ENCODE measurements at regions of chr19 and their contacts with region 1.

Region 1: GRCh38 chr19:17539238-17540117 is 16.0 kb upstream of the COLGALT1 start:
- DNase-seq: peak; percentile 91 to 100 (median 95)
- H3K4me3 ChIP-seq: peak overlapping the region in 1 of 2 donors; percentile 55
- H3K4me3 Mint-ChIP-seq: peak overlapping the region; percentile 79 to 95 (median 88)
- H3K27ac ChIP-seq: peak overlapping the region; percentile 47
- H3K27ac Mint-ChIP-seq: peak overlapping the region; percentile 61 to 89 (median 84)
- H3K4me1 ChIP-seq: peaks cover 13% of the 10 kb centered on the region
- H3K4me1 Mint-ChIP-seq: peaks cover 10 to 16% (median 12%) of the 10 kb centered on the region in 4 donors
- H3K27me3 ChIP-seq: no peaks in the 10 kb centered on the region
- H3K27me3 Mint-ChIP-seq: no peaks in the 10 kb centered on the region

Region 2: DNA sequence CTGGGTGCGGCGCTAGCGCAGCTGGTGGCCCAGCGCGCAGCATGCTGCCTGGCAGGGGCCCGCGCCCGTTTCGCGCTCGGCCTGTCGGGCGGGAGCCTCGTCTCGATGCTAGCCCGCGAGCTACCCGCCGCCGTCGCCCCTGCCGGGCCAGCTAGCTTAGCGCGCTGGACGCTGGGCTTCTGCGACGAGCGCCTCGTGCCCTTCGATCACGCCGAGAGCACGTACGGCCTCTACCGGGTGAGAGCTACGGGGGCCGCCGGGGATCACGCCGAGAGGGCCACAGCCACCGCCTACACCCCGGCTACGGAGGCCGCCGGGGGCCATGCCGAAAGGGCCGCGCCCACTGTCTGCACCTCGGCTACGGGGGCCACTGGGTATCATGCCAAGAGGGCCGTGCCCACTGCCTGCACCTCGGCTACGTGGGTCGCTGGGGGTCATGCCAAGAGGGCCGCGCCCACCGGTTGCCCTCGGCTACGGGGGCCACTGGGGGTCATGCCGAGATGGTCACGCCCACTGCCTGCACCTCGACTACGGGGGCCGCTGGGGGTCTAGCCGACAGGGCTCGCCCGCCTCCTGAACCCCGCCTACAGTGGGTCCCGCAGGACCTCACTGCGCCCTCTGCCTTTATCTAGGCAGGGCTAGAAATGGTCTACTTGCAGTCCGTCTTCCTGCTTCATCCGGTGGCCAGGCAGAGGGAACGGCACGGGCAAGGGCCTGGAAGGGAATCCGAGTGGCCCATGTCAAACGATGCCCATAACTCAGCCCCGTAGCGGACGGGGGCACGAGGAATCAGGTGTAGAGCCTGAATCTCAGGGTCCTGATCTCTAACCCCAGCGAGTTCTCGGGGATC is 27.5 kb before region 1 on chr19:
- CTCF ChIA-PET with region 1: interaction called, 3 read pairs
- POLR2A ChIA-PET with region 1: interaction called, 13 read pairs
- intact Hi-C with region 1: loop called (anchors 1 kb)
- DNase-seq: peak; percentile 86 to 90 (median 88)
- H3K4me3 ChIP-seq: peak overlapping the region; percentile 50 to 96
- H3K4me3 Mint-ChIP-seq: peak overlapping the region; percentile 88 to 100 (median 98)
- H3K27ac ChIP-seq: peak overlapping the region; percentile 92
- H3K27ac Mint-ChIP-seq: peak overlapping the region; percentile 90 to 98 (median 95)
- H3K4me1 ChIP-seq: peaks cover 20% of the 10 kb centered on the region
- H3K4me1 Mint-ChIP-seq: peaks cover 17 to 47% (median 30%) of the 10 kb centered on the region in 4 donors
- H3K27me3 ChIP-seq: no peaks in the 10 kb centered on the region
- H3K27me3 Mint-ChIP-seq: no peaks in the 10 kb centered on the region

Region 3: DNA sequence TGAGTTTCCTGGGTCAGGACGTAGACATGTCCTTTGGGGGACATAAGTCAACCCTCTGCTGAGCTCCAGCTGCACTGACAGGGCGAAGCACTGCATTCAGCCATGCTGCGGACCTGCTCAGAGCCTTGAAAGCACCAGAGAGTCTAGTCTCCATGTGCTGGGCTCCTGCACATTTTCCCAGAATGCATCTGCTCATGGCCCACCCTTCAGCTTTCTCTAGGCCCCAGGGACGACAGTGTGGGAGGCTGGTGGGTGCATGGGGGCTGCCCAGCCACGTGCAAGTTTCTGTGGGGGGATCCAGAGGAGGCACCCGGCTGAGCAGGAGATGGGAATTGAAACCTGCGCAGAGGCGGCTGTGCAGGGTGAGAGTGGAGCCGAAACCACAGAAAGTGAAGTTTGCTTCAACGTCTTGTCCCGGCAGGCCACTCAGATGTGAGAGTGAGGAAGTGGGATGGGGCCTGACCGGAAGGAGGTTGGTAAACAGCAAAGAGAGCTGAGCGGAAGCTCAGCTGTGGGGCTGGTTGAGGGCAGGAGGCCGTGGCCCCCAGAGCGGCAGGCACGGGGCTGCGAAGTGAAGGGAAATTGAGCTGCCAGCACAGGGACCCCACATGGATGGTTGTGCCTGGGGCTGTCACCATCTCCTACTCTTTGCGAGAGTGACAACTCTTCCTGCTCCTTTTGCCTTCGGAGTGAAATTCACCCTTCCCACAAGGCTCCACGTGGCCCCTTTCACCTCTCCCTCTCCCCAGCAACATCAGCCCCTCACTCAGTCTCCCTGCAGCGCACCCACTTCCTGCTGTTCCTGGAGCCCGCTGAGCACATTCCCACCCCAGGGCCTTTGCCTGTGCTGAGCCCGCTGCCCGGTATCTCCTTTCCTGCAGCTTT is 16.2 kb before region 1 on chr19:
- CTCF ChIA-PET with region 1: interaction called, 6 read pairs
- POLR2A ChIA-PET with region 1: interaction called, 27 read pairs
- intact Hi-C with region 1: no loop called
- DNase-seq: peak in 3 of 5 donors; percentile 26 to 40 (median 37)
- H3K4me3 ChIP-seq: peak overlapping the region in 1 of 2 donors; percentile 20
- H3K4me3 Mint-ChIP-seq: peak overlapping the region; percentile 72 to 90 (median 79)
- H3K27ac ChIP-seq: peak overlapping the region; percentile 46
- H3K27ac Mint-ChIP-seq: peak overlapping the region; percentile 76 to 92 (median 89)
- H3K4me1 ChIP-seq: peaks cover 26% of the 10 kb centered on the region
- H3K4me1 Mint-ChIP-seq: peaks cover 13 to 29% (median 17%) of the 10 kb centered on the region in 4 donors
- H3K27me3 ChIP-seq: no peaks in the 10 kb centered on the region
- H3K27me3 Mint-ChIP-seq: no peaks in the 10 kb centered on the region

Region 4: DNA sequence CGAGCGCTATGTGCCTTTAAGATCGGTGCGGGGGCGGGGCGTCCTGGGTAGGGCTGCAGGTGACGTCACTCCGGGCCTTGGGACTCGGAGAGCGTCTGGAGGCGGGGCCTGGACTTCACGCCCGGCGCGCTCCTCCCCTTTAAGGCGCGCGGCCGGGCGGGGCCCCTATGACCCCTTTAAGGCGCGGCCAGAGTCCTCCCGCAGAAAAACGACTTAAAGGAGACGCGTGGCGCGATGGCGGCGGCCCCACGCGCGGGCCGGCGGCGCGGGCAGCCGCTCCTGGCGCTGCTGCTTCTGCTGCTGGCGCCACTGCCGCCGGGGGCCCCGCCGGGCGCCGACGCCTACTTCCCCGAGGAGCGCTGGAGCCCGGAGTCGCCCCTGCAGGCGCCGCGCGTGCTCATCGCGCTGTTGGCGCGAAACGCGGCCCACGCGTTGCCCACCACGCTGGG is 16.0 kb after region 1 on chr19 and contains the start of gene COLGALT1:
- CTCF ChIA-PET with region 1: interaction called, 3 read pairs
- POLR2A ChIA-PET with region 1: no interaction called
- intact Hi-C with region 1: loop called (anchors 1 kb)
- DNase-seq: peak; percentile 94 to 98 (median 95)
- H3K4me3 ChIP-seq: peak within 1 kb of the TSS; percentile 54 to 80
- H3K4me3 Mint-ChIP-seq: peak within 1 kb of the TSS; percentile 83 to 89 (median 86)
- H3K27ac ChIP-seq: peak within 1 kb of the TSS; percentile 62
- H3K27ac Mint-ChIP-seq: peak within 1 kb of the TSS in 6 of 7 donors; percentile 63 to 92 (median 76)
- H3K4me1 ChIP-seq: peaks cover 18% of the 10 kb centered on the region
- H3K4me1 Mint-ChIP-seq: peaks cover 8 to 25% (median 14%) of the 10 kb centered on the region in 4 donors
- H3K27me3 ChIP-seq: no peaks in the 10 kb centered on the region
- H3K27me3 Mint-ChIP-seq: no peaks in the 10 kb centered on the region
- total RNA-seq, gene COLGALT1: 68.3 to 74.7 TPM

Region 5: DNA sequence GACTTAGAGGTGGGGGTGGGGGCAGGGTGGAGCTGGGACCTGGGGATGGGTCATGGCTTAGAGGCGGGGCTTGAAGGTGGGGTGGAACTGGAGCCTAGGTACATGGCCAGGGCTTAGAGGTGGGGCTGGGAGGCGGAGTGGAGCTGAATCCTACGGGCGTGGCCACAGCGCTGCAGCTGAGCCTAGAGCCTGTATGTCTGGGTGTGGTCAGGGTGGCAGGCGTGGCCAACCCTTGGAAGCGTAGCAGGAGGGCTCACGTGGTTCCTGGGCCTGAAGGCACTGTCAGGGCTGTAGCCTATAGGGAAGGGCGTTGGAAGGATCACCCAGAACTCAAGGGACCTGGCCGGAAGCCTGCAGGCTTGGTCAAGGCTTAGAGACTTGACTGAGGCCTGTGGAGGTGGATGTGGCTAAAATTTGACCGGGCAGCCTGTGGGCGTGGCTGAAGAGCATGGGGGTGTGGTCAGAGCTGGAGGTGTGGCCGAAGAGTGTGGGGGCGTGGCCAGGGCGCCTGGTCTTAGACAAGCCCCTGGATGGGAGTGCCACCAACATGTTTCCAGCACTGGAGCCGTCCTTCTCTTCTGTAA is 40.3 kb after region 1 on chr19:
- CTCF ChIA-PET with region 1: no interaction called
- POLR2A ChIA-PET with region 1: no interaction called
- intact Hi-C with region 1: loop called (anchors 1 kb)
- DNase-seq: peak in 2 of 5 donors; percentile 8 to 11
- H3K4me3 ChIP-seq: no peak overlapping the region
- H3K4me3 Mint-ChIP-seq: no peak overlapping the region
- H3K27ac ChIP-seq: no peak overlapping the region
- H3K27ac Mint-ChIP-seq: peak overlapping the region in 1 of 7 donors; percentile 84
- H3K4me1 ChIP-seq: no peaks in the 10 kb centered on the region
- H3K4me1 Mint-ChIP-seq: peaks cover 0 to 4% (median under 1%) of the 10 kb centered on the region in 4 donors
- H3K27me3 ChIP-seq: no peaks in the 10 kb centered on the region
- H3K27me3 Mint-ChIP-seq: no peaks in the 10 kb centered on the region

Region 6: DNA sequence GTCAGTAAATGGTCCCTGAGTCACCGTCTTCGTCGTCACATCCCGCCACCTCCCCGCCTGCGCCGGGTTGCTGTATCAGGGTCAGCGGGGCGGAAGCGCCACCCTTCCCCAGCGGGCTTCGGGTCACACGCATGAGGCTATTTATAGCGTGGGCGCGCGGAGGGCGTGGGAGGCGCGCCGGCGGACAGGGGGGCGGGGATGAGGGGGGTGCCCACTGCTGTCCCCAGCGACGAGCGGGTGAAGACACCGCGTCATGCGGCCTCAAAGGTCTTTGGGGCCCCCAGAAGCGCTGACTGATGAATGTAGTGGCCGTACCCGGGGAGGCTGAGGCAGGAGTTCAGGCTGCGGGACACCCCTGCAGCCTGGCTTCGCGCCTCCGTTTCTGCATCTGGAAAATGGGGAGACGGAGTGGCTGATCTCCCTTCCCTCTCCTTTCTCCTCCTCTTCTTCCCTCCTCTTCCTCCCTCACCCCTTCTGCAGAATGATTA is 140.8 kb after region 1 on chr19:
- CTCF ChIA-PET with region 1: no interaction called
- POLR2A ChIA-PET with region 1: no interaction called
- intact Hi-C with region 1: no loop called
- DNase-seq: peak in 3 of 5 donors; percentile 17 to 47 (median 24)
- H3K4me3 ChIP-seq: no peak overlapping the region
- H3K4me3 Mint-ChIP-seq: peak overlapping the region in 4 of 8 donors; percentile 25 to 59 (median 52)
- H3K27ac ChIP-seq: no peak overlapping the region
- H3K27ac Mint-ChIP-seq: peak overlapping the region in 2 of 7 donors; percentile 31 to 59
- H3K4me1 ChIP-seq: peaks cover 5% of the 10 kb centered on the region
- H3K4me1 Mint-ChIP-seq: peaks cover 3 to 12% (median 8%) of the 10 kb centered on the region in 4 donors
- H3K27me3 ChIP-seq: peaks cover 11% of the 10 kb centered on the region
- H3K27me3 Mint-ChIP-seq: peaks cover 38 to 56% of the 10 kb centered on the region in 2 donors

Region 7: GRCh38 chr19:17859533-17860330 is 320.3 kb after region 1 on chr19 and contains the start of gene RPL18A:
- CTCF ChIA-PET with region 1: no interaction called
- POLR2A ChIA-PET with region 1: no interaction called
- intact Hi-C with region 1: no loop called
- DNase-seq: peak; percentile 96 to 100 (median 99)
- H3K4me3 ChIP-seq: peak within 1 kb of the TSS; percentile 91 to 100
- H3K4me3 Mint-ChIP-seq: peak within 1 kb of the TSS; percentile 98 to 100 (median 100)
- H3K27ac ChIP-seq: peak within 1 kb of the TSS; percentile 79
- H3K27ac Mint-ChIP-seq: peak within 1 kb of the TSS; percentile 88 to 100 (median 98)
- H3K4me1 ChIP-seq: peaks cover 36% of the 10 kb centered on the region
- H3K4me1 Mint-ChIP-seq: peaks cover 21 to 46% (median 29%) of the 10 kb centered on the region in 4 donors
- H3K27me3 ChIP-seq: no peaks in the 10 kb centered on the region
- H3K27me3 Mint-ChIP-seq: no peaks in the 10 kb centered on the region
- total RNA-seq, gene RPL18A: 3,084 to 3,117 TPM

Region 8: GRCh38 chr19:18007044-18007916 is 467.8 kb after region 1 on chr19:
- CTCF ChIA-PET with region 1: no interaction called
- POLR2A ChIA-PET with region 1: no interaction called
- intact Hi-C with region 1: no loop called
- DNase-seq: peak; percentile 75 to 85 (median 79)
- H3K4me3 ChIP-seq: peak overlapping the region; percentile 18 to 68
- H3K4me3 Mint-ChIP-seq: peak overlapping the region; percentile 86 to 95 (median 90)
- H3K27ac ChIP-seq: peak overlapping the region; percentile 95
- H3K27ac Mint-ChIP-seq: peak overlapping the region; percentile 95 to 100 (median 97)
- H3K4me1 ChIP-seq: peaks cover 56% of the 10 kb centered on the region
- H3K4me1 Mint-ChIP-seq: peaks cover 10 to 59% (median 28%) of the 10 kb centered on the region in 4 donors
- H3K27me3 ChIP-seq: no peaks in the 10 kb centered on the region
- H3K27me3 Mint-ChIP-seq: no peaks in the 10 kb centered on the region

Measured in CD4-positive, alpha-beta memory T cell (primary cell).